GM10248 (cell line): ENCODE measurements at regions of chr10 and their contacts with region 1.

Region 1: DNA sequence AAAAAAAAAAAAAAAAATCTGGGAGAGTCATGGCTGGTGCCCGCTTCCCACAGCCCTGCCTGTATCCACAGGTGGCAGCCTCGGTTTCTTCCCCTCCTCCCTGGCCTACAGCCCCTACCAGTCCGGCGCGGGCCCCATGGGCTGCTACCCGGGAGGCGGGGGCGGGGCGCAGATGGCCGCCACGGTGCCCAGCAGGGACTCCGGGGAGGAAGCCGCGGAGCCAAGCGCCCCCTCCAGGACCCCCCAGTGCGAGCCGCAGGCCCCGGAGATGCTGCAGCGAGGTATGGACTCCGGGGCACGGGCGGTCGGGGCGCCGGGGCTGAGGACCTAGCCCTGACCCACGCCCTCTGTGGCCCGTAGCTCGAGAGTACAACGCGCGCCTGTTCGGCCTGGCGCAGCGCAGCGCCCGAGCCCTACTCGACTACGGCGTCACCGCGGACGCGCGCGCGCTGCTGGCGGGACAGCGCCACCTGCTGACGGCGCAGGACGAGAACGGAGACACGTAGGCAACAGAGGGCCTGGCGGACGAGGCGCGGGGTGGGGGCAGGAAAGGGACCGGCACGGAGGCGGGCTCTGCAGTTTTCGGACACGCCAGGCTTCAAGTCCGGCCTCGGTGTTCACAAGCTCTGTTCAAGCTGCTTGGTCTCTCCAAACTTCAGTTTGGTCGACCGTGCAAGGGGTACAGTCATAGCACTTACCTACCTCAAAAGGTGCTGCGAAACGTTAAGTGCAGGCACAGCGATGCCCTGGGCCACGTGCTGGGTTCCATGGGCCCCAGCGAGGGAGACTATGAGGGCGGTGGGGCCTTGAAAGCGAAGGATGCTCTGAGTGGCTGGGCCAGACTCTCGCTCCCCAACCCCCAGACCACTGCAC is 3.9 kb downstream of the NFKB2 start:
- DNase-seq: peak; percentile 89
- CTCF ChIP-seq: peak; percentile 99

Region 2: GRCh38 chr10:101744267-101744666 is 655.2 kb before region 1 on chr10:
- CTCF ChIA-PET with region 1: no interaction called
- POLR2A ChIA-PET with region 1: no interaction called
- DNase-seq: no peak
- CTCF ChIP-seq: no peak

Region 3: DNA sequence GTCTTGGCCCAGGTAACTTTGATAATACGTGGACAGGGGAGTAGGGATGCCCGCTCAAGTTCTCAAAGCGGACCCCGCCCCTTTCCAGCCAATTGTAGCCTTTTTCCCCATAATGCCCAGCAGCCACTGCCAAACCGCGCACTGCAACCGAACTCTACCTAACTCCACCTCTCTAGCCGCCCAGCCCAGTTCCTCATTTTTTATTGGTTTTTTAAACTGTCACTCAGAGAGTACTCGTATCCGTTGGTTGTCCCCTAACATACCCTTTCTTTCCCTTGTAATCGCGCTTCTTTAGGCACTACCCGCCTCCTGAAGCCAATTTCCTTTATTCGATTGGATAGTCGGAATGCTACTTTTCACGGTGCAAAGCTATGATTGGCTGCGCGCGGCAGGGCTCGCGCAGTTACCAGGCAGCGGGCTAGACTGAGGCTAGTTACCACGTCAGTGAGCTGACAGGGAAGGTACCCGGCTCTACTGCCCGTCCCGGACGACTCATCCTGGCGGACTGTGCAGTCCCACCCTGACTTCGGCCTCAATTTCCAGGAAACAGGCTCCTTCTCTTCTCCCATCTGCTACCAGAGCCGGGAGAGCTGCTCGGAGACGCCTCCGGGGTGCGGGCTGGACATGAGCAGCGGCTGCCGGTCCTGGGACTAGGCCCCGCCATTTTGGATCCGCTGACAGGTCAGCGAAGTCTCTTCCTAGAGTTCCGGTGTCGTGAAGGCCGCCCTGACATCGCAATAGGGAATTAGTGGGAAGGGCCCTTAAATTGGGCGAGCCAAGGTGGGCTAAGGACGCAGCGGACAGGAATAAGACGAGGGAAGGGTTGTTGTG is 154.1 kb before region 1 on chr10 and contains the start of gene GBF1:
- CTCF ChIA-PET with region 1: interaction called, 10 read pairs
- POLR2A ChIA-PET with region 1: interaction called, 6 read pairs
- DNase-seq: peak; percentile 96
- CTCF ChIP-seq: no peak

Region 4: GRCh38 chr10:102384053-102384452 is 15.4 kb before region 1 on chr10:
- CTCF ChIA-PET with region 1: interaction called, 52 read pairs
- POLR2A ChIA-PET with region 1: interaction called, 4 read pairs
- DNase-seq: no peak
- CTCF ChIP-seq: no peak

Region 5: GRCh38 chr10:102432162-102432950 is 32.9 kb after region 1 on chr10 and contains the start of gene CUEDC2:
- CTCF ChIA-PET with region 1: interaction called, 140 read pairs
- POLR2A ChIA-PET with region 1: interaction called, 9 read pairs
- DNase-seq: peak; percentile 94
- CTCF ChIP-seq: no peak

Region 6: DNA sequence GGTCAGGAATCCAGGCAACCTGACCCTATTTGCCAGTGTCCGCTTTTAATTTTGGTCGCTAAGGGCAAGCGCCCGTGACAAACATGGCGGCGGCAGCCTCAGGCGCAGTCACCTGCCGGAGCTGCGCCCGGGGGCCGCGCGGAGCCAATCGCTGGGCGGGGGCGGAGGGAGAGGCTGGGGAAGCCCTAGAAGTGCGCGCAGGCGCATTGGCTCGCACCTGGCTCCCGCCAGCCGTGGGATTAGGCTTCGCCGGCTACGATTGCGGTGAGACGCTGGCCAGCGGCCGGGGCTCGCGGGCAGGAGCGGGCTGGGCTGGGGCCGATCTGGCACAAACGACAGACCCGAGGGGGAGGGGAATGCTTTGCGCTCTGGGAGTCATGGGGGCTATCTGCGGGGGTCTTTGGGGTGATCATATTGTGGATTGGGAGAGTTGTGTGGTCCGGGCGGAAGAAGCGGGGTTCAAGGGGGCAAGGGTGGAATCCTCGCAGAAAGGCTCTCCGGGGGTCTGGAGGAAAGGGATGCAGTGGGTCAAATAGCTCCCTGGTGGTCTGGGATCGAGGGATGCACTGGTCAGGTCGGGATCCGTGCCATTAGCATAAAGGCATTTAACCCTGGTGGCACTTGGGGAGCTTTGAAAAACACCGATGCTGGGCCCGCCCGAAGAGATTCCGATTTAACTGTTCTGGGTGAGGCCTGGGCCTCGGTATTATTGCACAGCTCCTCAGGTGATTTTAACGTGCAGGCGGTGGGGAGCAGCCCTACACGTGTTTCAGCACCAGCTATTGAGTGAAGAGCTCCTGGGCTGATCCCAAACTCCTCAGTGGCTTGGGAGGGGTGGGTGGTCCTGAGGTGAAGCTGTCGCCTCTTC is 62.0 kb after region 1 on chr10:
- CTCF ChIA-PET with region 1: interaction called, 12 read pairs
- POLR2A ChIA-PET with region 1: no interaction called
- DNase-seq: peak; percentile 100
- CTCF ChIP-seq: no peak

Region 7: GRCh38 chr10:102523250-102524029 is 124.0 kb after region 1 on chr10:
- CTCF ChIA-PET with region 1: no interaction called
- POLR2A ChIA-PET with region 1: no interaction called
- DNase-seq: no peak
- CTCF ChIP-seq: no peak